Posterior vena cava (tissue), 2 donors: ENCODE measurements at regions of chr22 and their contacts with region 1.

Region 1: GRCh38 chr22:49306632-49307480 is 520.8 kb downstream of the BRD1 start:
- DNase-seq: peak; percentile 70

Region 2: DNA sequence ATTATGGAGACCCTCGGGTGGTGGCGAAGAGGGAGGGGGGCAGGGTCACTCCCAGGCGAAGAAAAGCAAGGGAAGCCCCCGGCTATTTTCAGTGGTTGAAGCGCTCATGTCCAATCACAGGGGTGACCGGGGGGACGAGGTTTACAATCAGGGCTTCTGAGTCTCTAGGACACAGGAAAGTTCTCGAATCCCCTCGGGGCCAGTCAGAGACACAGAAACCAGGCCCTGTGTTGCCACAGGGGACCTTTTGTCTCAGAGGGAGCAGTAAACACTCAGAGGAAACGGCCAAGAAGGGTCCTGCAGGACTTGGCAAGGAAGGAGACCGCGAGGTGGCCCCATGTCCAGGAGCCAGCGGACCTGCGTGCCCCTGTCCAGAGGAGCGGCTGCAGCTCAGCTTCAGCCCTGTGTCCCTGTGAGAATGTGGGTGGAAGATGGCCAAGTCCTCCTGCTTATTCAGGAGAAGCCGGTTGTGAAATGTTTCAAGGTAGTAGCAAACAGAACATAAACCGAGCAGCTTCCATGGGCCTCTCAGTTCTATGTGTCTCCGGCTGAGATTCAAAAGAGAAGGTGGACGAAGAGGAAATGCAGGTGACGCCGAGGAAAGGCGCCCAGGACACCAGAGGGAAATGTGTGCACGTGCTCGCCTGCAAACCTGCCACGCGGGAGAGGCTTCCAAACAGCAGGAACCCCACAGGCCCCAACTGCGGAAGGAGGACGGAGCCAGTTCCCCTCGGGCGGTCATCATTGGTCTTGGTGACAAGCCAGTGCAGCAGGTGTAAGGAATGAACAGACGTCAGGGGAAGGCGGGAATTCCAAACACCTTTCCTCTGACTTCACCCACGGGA is 163.3 kb after region 1 on chr22:
- intact Hi-C with region 1: no loop called
- DNase-seq: peak; percentile 68

Region 3: GRCh38 chr22:49606562-49607290 is 299.9 kb after region 1 on chr22:
- intact Hi-C with region 1: loop called in 1 of 2 experiments (anchors 2 kb)
- DNase-seq: peak; percentile 64